ENCODE measurements at regions of chr9 and their contacts with region 1.

Region 1: DNA sequence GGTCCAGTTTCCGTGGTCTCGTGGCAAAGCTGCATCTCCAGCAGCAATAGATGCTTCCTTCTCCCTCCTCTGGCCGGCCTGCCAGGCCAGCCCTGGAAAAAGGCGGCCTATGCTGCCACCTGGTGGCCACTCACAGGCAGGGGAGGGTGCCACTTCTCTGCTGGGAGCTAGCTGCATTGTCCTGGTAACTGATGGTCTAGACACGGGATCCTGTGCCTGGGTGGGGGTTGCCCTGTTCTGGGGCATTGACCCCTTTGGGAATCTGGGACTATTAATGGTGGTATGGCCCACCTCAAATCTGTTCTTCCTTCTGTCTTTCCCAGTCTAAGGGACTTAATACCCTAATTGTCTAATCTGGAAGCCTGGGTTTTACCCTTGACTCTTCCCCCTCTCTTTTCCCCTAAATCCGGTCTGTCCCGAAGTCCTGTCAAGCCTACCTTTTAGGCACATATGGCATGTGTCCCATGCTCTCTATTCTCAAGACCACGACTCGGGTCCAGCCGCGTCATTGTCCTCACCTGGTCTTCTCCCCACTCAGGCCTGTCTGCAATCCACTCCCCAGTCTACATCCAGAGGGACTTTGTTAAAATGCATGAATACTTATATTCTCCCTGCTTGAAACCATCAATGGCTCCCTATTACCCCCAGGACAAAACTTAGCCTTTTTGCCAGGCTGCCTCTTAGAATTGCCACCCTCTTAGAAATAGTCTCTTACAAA is 20.0 kb upstream of the PTGS1 start:
- DNase-seq: peak; percentile 78 to 94 (median 86)
- H3K4me3 ChIP-seq: no peak overlapping the region
- H3K27ac ChIP-seq: peak overlapping the region in 5 of 59 donors; percentile 3 to 46 (median 22)
- H3K27me3 ChIP-seq: peaks cover 0 to 2% (median 0%) of the 10 kb centered on the region in 45 donors
- CTCF ChIP-seq: peak; percentile 96 to 100 (median 99)

Region 2: DNA sequence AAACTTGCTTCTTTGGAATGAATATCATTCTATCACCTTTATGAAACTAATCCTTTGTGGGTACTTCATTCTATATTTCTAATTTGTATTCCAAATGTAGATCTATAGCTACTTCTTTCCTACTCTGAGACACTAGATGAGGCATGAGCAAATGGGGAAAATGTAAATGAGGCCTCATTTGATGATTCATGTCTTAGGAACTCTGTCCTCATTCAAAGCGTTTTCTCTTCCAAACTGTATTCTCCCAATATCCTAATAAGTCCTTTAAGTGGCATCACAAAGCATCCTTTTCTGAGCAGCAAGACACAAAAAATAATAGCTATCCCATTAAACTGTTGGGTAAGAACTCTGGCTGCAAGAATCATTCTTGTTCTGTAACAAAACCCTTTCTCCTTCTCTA is 313.8 kb before region 1 on chr9:
- intact Hi-C with region 1: loop called in 1 of 2 experiments (anchors 10 kb)
- DNase-seq: no peak
- H3K4me3 ChIP-seq: no peak overlapping the region
- H3K27ac ChIP-seq: peak overlapping the region in 6 of 59 donors; percentile 9 to 43 (median 16)
- H3K27me3 ChIP-seq: no peaks in the 10 kb centered on the region
- CTCF ChIP-seq: no peak

Region 3: DNA sequence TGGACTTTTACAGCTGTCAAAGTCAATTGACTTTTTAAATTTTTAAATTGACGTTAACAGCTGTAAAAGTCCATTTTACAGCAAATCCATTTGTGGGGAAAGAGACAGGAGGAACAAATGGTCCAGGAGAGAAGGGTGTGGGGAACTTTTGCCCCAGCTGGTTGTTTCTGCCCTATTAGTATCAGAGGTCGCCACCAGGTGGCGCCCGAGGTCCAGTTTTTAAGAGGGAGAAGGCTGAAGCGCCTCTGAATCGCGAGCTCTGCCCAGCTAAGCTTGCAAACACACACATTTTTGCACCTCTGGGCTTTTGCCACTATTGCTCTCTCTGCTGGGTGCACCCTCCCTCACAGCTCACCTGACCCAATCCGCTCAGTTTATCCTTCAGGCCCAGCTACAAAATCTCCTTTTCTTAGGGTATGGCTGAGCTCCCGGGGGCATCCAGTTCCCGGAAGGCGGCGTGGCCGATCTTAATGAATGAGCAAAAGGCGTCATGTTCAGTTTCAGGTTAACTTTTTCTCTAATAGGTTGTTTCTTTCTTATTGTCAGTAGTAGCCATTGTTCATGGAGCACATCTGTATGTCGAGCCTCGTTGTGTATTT is 251.4 kb before region 1 on chr9:
- intact Hi-C with region 1: loop called in 1 of 2 experiments (anchors 2 kb)
- DNase-seq: peak; percentile 81 to 90 (median 84)
- H3K4me3 ChIP-seq: peak overlapping the region in 29 of 59 donors; percentile 0 to 50 (median 31)
- H3K27ac ChIP-seq: peak overlapping the region in 3 of 59 donors; percentile 36 to 65 (median 49)
- H3K27me3 ChIP-seq: no peaks in the 10 kb centered on the region
- CTCF ChIP-seq: peak; percentile 82 to 99 (median 94)

Region 4: GRCh38 chr9:122264360-122265148 is 86.2 kb before region 1 on chr9 and contains the starts of genes MRRF and RBM18:
- intact Hi-C with region 1: loop called in 1 of 2 experiments (anchors 5 kb)
- DNase-seq: peak; percentile 83 to 95 (median 88)
- H3K4me3 ChIP-seq: peak within 1 kb of the TSS; percentile 57 to 98 (median 83)
- H3K27ac ChIP-seq: peak within 1 kb of the TSS; percentile 49 to 95 (median 87)
- H3K27me3 ChIP-seq: no peaks in the 10 kb centered on the region
- CTCF ChIP-seq: peak in 28 of 56 donors; percentile 5 to 64 (median 30)
- total RNA-seq, gene MRRF: 21.9 to 44.0 (median 29.3) TPM
- total RNA-seq, gene RBM18: 14.1 to 43.0 (median 29.6) TPM

Region 5: DNA sequence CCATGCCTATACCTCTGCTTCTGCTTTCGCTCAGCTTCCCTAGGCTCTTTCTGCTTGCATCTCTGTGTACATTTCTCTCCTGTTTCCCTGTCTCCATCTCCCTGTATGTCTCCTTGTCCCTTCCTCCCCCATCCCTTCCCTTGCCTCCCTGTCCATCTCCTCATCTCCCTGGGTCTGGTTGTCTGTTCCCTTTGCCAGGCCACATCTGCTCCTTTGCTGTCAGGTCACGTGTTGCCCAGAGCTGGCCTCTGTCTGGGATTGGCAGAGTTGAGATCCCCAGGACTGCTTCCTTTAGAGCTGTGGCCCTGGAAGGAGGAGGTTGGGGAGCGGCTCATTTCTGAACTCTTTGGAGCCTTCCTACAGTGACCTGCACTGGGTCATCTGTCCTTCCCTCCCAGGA is 11.8 kb before region 1 on chr9:
- intact Hi-C with region 1: no loop called
- DNase-seq: peak in 2 of 10 donors; percentile 44 to 49
- H3K4me3 ChIP-seq: no peak overlapping the region
- H3K27ac ChIP-seq: peak overlapping the region in 5 of 59 donors; percentile 15 to 59 (median 44)
- H3K27me3 ChIP-seq: no peaks in the 10 kb centered on the region
- CTCF ChIP-seq: no peak

Region 6: GRCh38 chr9:122810306-122810946 is 459.6 kb after region 1 on chr9:
- intact Hi-C with region 1: loop called in 1 of 2 experiments (anchors 10 kb)
- DNase-seq: peak; percentile 63 to 88 (median 76)
- H3K4me3 ChIP-seq: peak overlapping the region in 1 of 59 donors; percentile 21
- H3K27ac ChIP-seq: peak overlapping the region in 1 of 59 donors; percentile 31
- H3K27me3 ChIP-seq: no peaks in the 10 kb centered on the region
- CTCF ChIP-seq: peak; percentile 76 to 97 (median 88)